Activated CD8-positive, alpha-beta T cell treated with anti-CD3 and anti-CD28 coated beads for 36 hours (primary cell): ENCODE measurements at regions of chr16 and their contacts with region 1.

Region 1: DNA sequence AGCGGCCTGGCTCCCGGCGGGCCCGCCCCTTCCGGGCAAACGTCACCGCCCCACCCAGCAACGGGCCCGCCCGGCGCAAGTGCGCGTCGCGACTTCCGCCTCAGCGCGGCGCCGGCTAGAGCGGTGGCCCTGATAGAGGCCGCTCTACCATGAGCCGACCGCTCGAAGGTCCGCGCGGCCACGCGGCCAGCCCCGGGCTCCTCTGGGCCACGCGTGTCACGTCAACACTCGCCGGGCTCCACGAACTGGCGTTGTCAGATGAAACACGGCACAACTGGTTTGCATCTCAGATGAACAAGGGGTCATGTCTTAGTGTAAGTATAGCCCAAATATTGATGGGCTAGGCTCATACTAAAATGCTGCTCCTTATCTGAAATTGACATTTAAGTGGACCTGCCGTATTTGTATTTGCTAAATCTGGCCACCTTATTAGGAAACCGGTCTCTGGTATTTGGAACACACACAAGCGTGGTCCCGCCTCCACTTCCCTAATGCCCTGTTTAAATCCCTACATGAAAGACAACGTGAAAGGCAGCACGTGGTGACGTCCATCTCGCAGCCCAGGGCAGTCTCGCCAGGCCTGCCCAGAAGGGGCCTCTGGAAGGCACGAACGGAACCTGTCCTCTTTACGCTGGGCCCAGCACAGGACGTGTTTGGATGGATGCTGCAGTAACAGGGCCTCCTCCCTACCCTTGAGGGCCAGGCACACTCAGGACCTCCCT is at the start of gene ZNF598:
- DNase-seq: peak; percentile 83
- ATAC-seq: peak; percentile 94
- H3K4me3 Mint-ChIP-seq: peak within 1 kb of the TSS; percentile 97
- H3K27ac Mint-ChIP-seq: peak within 1 kb of the TSS; percentile 94
- H3K4me1 Mint-ChIP-seq: peaks cover 39% of the 10 kb centered on the region
- H3K27me3 Mint-ChIP-seq: no peaks in the 10 kb centered on the region
- CTCF ChIP-seq: no peak
- total RNA-seq, gene ZNF598: 85.5 to 90.3 TPM

Region 2: GRCh38 chr16:1983544-1984346 is 26.2 kb before region 1 on chr16 and contains the start of gene GFER:
- CTCF ChIA-PET with region 1: interaction called, 9 read pairs
- POLR2A ChIA-PET with region 1: interaction called, 14 read pairs
- intact Hi-C with region 1: no loop called
- DNase-seq: peak; percentile 82
- ATAC-seq: peak; percentile 92
- H3K4me3 Mint-ChIP-seq: peak within 1 kb of the TSS; percentile 89
- H3K27ac Mint-ChIP-seq: peak within 1 kb of the TSS; percentile 30
- H3K4me1 Mint-ChIP-seq: peaks cover 20% of the 10 kb centered on the region
- H3K27me3 Mint-ChIP-seq: peaks cover 36% of the 10 kb centered on the region
- CTCF ChIP-seq: peak; percentile 22
- total RNA-seq, gene GFER: 33.5 to 33.9 TPM

Region 3: DNA sequence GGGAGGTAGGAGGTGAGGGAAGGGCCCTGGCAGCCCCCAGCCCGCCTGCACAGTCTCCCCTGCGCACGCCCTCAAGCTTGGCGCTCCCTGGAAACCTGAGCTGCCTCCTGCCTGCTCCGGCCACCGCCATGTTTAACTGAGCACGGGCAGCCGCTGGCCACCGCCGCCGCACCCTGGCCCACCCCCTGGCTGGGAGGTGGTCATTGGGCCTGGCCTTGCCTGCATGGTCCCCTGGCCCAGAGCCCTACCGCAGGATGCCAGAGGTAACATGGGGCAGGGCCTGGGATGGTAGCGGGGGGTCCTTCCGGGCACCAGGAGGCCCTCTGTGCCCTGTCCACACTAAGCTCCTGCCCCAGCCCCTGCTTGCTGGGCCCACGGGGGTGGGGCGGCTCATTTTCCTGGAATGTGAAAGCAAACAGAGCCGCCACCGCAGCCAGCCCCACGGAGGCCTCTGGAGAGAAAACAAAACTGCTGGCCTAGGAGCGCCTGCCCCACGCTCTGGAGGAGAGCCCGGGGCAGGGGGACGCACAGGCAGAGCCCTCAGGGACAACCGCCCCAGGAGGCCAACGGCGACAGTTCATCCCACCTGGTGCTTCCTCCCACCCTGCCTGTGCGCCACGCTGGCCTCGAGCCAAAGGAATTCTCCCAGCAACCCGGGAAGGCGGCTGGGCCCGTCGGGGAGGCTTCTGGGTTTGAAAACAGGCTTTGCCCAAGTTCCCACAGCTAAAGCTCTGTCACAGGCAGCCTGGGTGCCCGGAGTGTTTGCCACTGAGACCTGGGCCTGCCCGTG is 25.7 kb after region 1 on chr16:
- CTCF ChIA-PET with region 1: no interaction called
- POLR2A ChIA-PET with region 1: no interaction called
- intact Hi-C with region 1: no loop called
- DNase-seq: no peak
- ATAC-seq: no peak
- H3K4me3 Mint-ChIP-seq: no peak overlapping the region
- H3K27ac Mint-ChIP-seq: no peak overlapping the region
- H3K4me1 Mint-ChIP-seq: no peaks in the 10 kb centered on the region
- H3K27me3 Mint-ChIP-seq: no peaks in the 10 kb centered on the region
- CTCF ChIP-seq: no peak

Region 4: DNA sequence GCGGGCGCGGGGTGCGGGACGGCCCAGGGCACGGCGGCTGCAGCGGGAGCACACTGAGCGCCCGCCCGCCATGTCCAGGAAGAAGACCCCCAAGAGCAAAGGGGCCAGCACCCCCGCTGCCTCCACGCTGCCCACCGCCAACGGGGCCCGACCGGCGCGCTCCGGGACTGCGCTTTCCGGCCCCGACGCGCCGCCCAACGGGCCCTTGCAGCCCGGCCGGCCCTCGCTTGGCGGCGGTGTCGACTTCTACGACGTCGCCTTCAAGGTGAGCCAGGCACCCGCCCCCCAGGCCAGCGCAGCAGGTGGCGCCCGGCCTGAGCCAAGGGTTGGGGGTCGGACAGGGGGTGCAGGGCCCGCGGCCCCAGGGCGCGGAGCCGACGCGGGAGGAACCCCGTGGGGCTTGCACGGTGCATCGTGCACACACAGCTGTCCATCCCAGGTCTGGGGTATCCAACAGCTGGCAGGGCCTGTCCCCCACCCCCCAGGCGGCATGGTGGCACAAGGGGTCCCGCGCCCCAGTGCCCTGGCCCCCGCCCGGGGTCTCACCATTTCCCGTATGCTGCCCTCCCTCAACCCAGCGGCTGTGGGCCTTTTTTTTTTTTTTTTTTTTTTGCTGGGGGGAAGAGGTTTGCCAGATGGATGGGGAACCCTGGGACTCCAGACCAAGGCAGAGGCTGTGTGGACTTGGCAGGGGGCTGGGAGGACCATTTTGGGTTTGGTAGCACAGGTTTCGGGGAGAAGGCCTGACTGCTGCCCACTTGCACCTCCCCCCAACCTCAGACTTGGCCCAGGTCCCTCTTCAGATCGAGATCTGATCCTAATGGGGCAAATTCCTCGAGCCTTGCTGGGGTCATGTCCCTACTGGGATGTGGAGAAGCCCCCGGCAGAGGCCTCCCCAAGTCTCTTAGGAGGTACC is 139.0 kb after region 1 on chr16:
- CTCF ChIA-PET with region 1: interaction called, 3 read pairs
- POLR2A ChIA-PET with region 1: interaction called, 12 read pairs
- intact Hi-C with region 1: no loop called
- DNase-seq: peak; percentile 58
- ATAC-seq: peak; percentile 41
- H3K4me3 Mint-ChIP-seq: peak overlapping the region; percentile 39
- H3K27ac Mint-ChIP-seq: no peak overlapping the region
- H3K4me1 Mint-ChIP-seq: peaks cover 19% of the 10 kb centered on the region
- H3K27me3 Mint-ChIP-seq: no peaks in the 10 kb centered on the region
- CTCF ChIP-seq: peak; percentile 37

Region 5: GRCh38 chr16:2194852-2195321 is 184.9 kb after region 1 on chr16:
- CTCF ChIA-PET with region 1: no interaction called
- POLR2A ChIA-PET with region 1: no interaction called
- intact Hi-C with region 1: no loop called
- DNase-seq: peak; percentile 75
- ATAC-seq: peak; percentile 77
- H3K4me3 Mint-ChIP-seq: peak overlapping the region; percentile 55
- H3K27ac Mint-ChIP-seq: no peak overlapping the region
- H3K4me1 Mint-ChIP-seq: peaks cover 3% of the 10 kb centered on the region
- H3K27me3 Mint-ChIP-seq: peaks cover 23% of the 10 kb centered on the region
- CTCF ChIP-seq: peak; percentile 63